Heart right ventricle (tissue), 16 donors: ENCODE measurements at regions of chr15 and their contacts with region 1.

Region 1: DNA sequence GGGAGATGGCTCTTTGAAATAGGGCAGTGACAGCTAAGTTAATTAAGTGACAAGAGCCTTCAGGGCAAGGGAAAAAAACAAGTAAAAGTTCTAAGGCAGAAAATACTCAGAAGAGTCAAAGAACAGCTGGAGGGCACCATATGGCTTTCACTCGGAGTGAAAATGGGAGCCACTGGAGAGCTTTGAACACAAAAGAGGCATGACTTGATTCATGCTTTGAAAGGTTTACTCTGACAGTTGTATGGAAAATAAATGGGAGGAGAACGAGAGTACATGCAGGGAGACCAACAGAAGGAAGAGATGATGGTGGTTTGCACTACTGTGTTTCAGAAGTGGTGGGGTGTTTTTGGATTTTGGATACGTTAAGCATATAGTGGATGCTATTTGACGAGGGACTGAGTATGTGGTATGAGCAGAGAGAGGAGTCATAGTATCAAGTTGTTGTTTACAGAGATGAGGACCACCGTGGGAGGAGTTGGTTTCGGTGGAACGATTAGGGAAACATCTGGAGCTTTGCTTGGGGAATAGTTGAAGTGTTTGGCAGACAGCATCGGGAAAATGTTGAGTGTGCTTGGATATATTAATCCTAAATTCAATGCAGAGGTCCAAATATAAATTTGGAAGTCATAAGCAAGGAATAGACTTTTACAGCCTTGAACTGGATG is 411.5 kb downstream of the GABRG3 start:
- DNase-seq: no peak
- ATAC-seq: no peak
- H3K4me3 ChIP-seq: no peak overlapping the region
- H3K27ac ChIP-seq: no peak overlapping the region
- H3K4me1 ChIP-seq: no peaks in the 10 kb centered on the region
- H3K27me3 ChIP-seq: peaks cover 0 to 6% (median 0%) of the 10 kb centered on the region in 7 donors
- CTCF ChIP-seq: no peak

Region 2: GRCh38 chr15:27433604-27434003 is 51.1 kb after region 1 on chr15:
- intact Hi-C with region 1: loop called in 1 of 10 experiments (anchors 5 kb)
- DNase-seq: no peak
- ATAC-seq: no peak
- H3K4me3 ChIP-seq: no peak overlapping the region
- H3K27ac ChIP-seq: no peak overlapping the region
- H3K4me1 ChIP-seq: no peaks in the 10 kb centered on the region
- H3K27me3 ChIP-seq: peaks cover 0 to under 1% (median 0%) of the 10 kb centered on the region in 7 donors
- CTCF ChIP-seq: no peak